Naive thymus-derived CD8-positive, alpha-beta T cell (primary cell): ENCODE measurements at regions of chr10 and their contacts with region 1.

Region 1: DNA sequence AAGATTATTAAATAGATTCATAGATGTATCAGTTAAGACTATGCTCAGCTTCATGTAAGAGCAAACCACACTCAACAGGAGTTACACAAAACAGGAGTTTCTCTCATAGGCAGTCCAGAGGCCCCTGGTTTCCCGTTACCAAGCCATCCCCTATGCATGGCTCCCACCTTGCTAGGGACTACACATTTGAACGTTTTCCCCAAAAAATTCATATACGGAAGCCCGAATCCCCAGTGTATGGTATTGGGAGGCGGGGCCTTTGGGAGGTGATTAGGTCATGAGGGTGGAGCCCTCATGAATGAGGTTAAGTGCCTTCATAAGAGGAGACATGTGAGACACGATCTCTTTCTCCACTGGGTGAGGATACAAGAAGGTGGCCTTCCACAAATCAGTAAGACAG is 29.1 kb downstream of the RSU1 start:
- DNase-seq: peak in 1 of 10 donors; percentile 10
- ATAC-seq: peak; percentile 6 to 19
- H3K4me3 Mint-ChIP-seq: peak overlapping the region in 8 of 10 donors; percentile 11 to 74 (median 54)
- H3K27ac Mint-ChIP-seq: peak overlapping the region; percentile 89 to 99 (median 97)
- H3K4me1 Mint-ChIP-seq: peaks cover 17 to 44% (median 32%) of the 10 kb centered on the region in 4 donors
- H3K27me3 Mint-ChIP-seq: no peaks in the 10 kb centered on the region

Region 2: GRCh38 chr10:16817125-16818019 is 29.2 kb after region 1 on chr10 and contains the start of gene RSU1:
- POLR2A ChIA-PET with region 1: interaction called, 13 read pairs
- DNase-seq: peak; percentile 98 to 100 (median 100)
- ATAC-seq: peak; percentile 96 to 97
- H3K4me3 Mint-ChIP-seq: peak within 1 kb of the TSS; percentile 85 to 98 (median 94)
- H3K27ac Mint-ChIP-seq: peak within 1 kb of the TSS; percentile 93 to 98 (median 97)
- H3K4me1 Mint-ChIP-seq: peaks cover 22 to 50% (median 46%) of the 10 kb centered on the region in 4 donors
- H3K27me3 Mint-ChIP-seq: peaks cover 0 to 5% (median 0%) of the 10 kb centered on the region in 5 donors
- polyA plus RNA-seq, gene RSU1: 127 to 149 (median 138) TPM

Region 3: DNA sequence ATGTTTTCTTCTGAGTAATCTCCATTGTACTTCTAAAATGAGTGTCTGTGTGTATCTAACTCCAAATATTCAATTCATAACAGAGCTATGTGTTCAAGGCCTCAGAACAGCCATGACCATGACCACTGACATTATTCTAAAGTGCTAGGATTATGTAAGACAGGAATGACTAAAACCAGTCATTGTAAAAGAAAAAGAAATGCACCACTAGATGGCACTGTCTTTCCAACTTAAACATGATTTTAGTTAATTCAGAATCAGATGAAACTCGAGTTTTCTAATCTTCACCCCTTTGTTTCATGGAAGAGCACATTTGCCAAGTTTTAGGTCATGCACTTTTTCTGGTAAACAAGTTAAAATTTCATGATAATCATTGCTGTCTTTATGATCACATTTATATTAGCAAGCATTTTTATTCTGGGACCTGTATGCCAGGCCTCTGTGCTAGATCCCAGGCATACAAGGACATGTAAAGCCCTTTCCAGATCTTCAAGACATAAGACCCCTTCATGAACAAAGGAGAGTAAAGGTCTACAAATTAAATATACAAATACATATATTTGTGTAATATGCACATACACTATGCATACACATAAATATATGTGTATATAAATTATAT is 55.2 kb after region 1 on chr10:
- POLR2A ChIA-PET with region 1: no interaction called
- DNase-seq: peak in 4 of 10 donors; percentile 19 to 70 (median 68)
- ATAC-seq: peak; percentile 61 to 76
- H3K4me3 Mint-ChIP-seq: no peak overlapping the region
- H3K27ac Mint-ChIP-seq: peak overlapping the region in 1 of 10 donors; percentile 85
- H3K4me1 Mint-ChIP-seq: peaks cover 0 to 8% (median 2%) of the 10 kb centered on the region in 4 donors
- H3K27me3 Mint-ChIP-seq: peaks cover 0 to 2% (median 0%) of the 10 kb centered on the region in 5 donors